Naive thymus-derived CD4-positive, alpha-beta T cell (primary cell): ENCODE measurements at regions of chr2 and their contacts with region 1.

Region 1: GRCh38 chr2:140759426-140760156 is 1371.2 kb downstream of the LRP1B start:
- DNase-seq: no peak
- ATAC-seq: no peak
- H3K4me3 ChIP-seq: no peak overlapping the region
- H3K4me3 Mint-ChIP-seq: no peak overlapping the region
- H3K27ac ChIP-seq: no peak overlapping the region
- H3K27ac Mint-ChIP-seq: no peak overlapping the region
- H3K4me1 ChIP-seq: no peaks in the 10 kb centered on the region
- H3K4me1 Mint-ChIP-seq: no peaks in the 10 kb centered on the region
- H3K27me3 ChIP-seq: no peaks in the 10 kb centered on the region
- H3K27me3 Mint-ChIP-seq: no peaks in the 10 kb centered on the region

Region 2: GRCh38 chr2:140353541-140353940 is 406.1 kb before region 1 on chr2:
- CTCF ChIA-PET with region 1: no interaction called
- POLR2A ChIA-PET with region 1: no interaction called
- intact Hi-C with region 1: no loop called
- DNase-seq: no peak
- ATAC-seq: no peak
- H3K4me3 ChIP-seq: no peak overlapping the region
- H3K4me3 Mint-ChIP-seq: no peak overlapping the region
- H3K27ac ChIP-seq: no peak overlapping the region
- H3K27ac Mint-ChIP-seq: no peak overlapping the region
- H3K4me1 ChIP-seq: no peaks in the 10 kb centered on the region
- H3K4me1 Mint-ChIP-seq: no peaks in the 10 kb centered on the region
- H3K27me3 ChIP-seq: no peaks in the 10 kb centered on the region
- H3K27me3 Mint-ChIP-seq: no peaks in the 10 kb centered on the region

Region 3: DNA sequence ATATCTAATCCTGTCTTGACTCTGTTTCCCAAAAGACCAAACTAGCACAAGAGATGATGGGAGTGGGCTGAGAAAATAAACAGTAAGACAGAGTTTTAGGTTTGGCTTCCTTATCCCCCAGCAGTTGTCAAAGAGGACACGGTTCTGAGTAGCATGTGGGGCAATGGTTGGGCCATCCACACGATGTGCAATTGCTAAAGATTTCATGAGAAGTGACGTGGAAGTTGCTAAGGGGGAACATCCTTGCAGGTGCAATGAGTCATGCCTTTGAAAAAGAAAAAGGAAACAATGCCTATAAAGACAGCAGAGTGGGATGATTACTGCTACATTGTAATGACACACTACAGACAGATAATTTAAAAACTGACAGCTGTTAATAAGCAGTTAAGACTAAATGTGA is 24.6 kb before region 1 on chr2:
- CTCF ChIA-PET with region 1: no interaction called
- POLR2A ChIA-PET with region 1: no interaction called
- intact Hi-C with region 1: no loop called
- DNase-seq: no peak
- ATAC-seq: no peak
- H3K4me3 ChIP-seq: no peak overlapping the region
- H3K4me3 Mint-ChIP-seq: no peak overlapping the region
- H3K27ac ChIP-seq: no peak overlapping the region
- H3K27ac Mint-ChIP-seq: no peak overlapping the region
- H3K4me1 ChIP-seq: no peaks in the 10 kb centered on the region
- H3K4me1 Mint-ChIP-seq: no peaks in the 10 kb centered on the region
- H3K27me3 ChIP-seq: no peaks in the 10 kb centered on the region
- H3K27me3 Mint-ChIP-seq: no peaks in the 10 kb centered on the region

Region 4: DNA sequence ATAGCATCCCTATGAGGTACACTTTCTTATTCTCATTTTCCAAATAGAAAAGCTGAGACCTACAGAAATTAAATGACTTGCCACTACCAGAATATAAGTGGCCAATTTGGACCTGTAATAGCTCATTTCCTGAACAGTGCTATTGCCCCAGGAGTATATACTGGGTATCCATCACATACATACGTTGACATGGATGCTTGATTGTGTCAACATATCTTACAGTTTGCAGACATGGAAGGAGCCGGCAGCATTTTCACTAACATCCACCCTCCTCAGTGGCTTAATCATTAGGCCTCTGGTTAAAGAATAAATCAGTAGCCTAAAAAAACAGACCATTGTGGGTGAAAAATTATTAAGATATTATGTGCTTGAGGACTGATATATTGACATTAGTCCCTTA is 542.0 kb after region 1 on chr2:
- CTCF ChIA-PET with region 1: no interaction called
- POLR2A ChIA-PET with region 1: no interaction called
- intact Hi-C with region 1: loop called in 1 of 2 experiments (anchors 10 kb)
- DNase-seq: no peak
- ATAC-seq: no peak
- H3K4me3 ChIP-seq: no peak overlapping the region
- H3K4me3 Mint-ChIP-seq: no peak overlapping the region
- H3K27ac ChIP-seq: no peak overlapping the region
- H3K27ac Mint-ChIP-seq: no peak overlapping the region
- H3K4me1 ChIP-seq: no peaks in the 10 kb centered on the region
- H3K4me1 Mint-ChIP-seq: no peaks in the 10 kb centered on the region
- H3K27me3 ChIP-seq: no peaks in the 10 kb centered on the region
- H3K27me3 Mint-ChIP-seq: no peaks in the 10 kb centered on the region

Region 5: GRCh38 chr2:142165790-142166189 is 1406.2 kb after region 1 on chr2:
- CTCF ChIA-PET with region 1: no interaction called
- POLR2A ChIA-PET with region 1: no interaction called
- intact Hi-C with region 1: no loop called
- DNase-seq: no peak
- ATAC-seq: no peak
- H3K4me3 ChIP-seq: no peak overlapping the region
- H3K4me3 Mint-ChIP-seq: no peak overlapping the region
- H3K27ac ChIP-seq: no peak overlapping the region
- H3K27ac Mint-ChIP-seq: no peak overlapping the region
- H3K4me1 ChIP-seq: no peaks in the 10 kb centered on the region
- H3K4me1 Mint-ChIP-seq: no peaks in the 10 kb centered on the region
- H3K27me3 ChIP-seq: no peaks in the 10 kb centered on the region
- H3K27me3 Mint-ChIP-seq: no peaks in the 10 kb centered on the region